ENCODE measurements at regions of chr21 and their contacts with region 1.

Region 1: GRCh38 chr21:33751120-33751519 is 108.8 kb downstream of the ITSN1 start:
- DNase-seq: no peak
- H3K4me3 ChIP-seq: no peak overlapping the region
- H3K27ac ChIP-seq: no peak overlapping the region
- H3K4me1 ChIP-seq: no peaks in the 10 kb centered on the region
- H3K27me3 ChIP-seq: no peaks in the 10 kb centered on the region
- CTCF ChIP-seq: no peak
- POLR2A ChIP-seq: no peak

Region 2: GRCh38 chr21:33598051-33598450 is 153.1 kb before region 1 on chr21:
- intact Hi-C with region 1: loop called (anchors 5 kb)
- DNase-seq: no peak
- H3K4me3 ChIP-seq: no peak overlapping the region
- H3K27ac ChIP-seq: no peak overlapping the region
- H3K4me1 ChIP-seq: no peaks in the 10 kb centered on the region
- H3K27me3 ChIP-seq: no peaks in the 10 kb centered on the region
- CTCF ChIP-seq: no peak
- POLR2A ChIP-seq: no peak

Region 3: GRCh38 chr21:33780631-33781030 is 29.5 kb after region 1 on chr21:
- intact Hi-C with region 1: no loop called
- DNase-seq: no peak
- H3K4me3 ChIP-seq: no peak overlapping the region
- H3K27ac ChIP-seq: no peak overlapping the region
- H3K4me1 ChIP-seq: no peaks in the 10 kb centered on the region
- H3K27me3 ChIP-seq: no peaks in the 10 kb centered on the region
- CTCF ChIP-seq: no peak
- POLR2A ChIP-seq: no peak

Measured in breast epithelium (tissue), 4 donors.